ENCODE measurements at regions of chr9 and their contacts with region 1.

Region 1: DNA sequence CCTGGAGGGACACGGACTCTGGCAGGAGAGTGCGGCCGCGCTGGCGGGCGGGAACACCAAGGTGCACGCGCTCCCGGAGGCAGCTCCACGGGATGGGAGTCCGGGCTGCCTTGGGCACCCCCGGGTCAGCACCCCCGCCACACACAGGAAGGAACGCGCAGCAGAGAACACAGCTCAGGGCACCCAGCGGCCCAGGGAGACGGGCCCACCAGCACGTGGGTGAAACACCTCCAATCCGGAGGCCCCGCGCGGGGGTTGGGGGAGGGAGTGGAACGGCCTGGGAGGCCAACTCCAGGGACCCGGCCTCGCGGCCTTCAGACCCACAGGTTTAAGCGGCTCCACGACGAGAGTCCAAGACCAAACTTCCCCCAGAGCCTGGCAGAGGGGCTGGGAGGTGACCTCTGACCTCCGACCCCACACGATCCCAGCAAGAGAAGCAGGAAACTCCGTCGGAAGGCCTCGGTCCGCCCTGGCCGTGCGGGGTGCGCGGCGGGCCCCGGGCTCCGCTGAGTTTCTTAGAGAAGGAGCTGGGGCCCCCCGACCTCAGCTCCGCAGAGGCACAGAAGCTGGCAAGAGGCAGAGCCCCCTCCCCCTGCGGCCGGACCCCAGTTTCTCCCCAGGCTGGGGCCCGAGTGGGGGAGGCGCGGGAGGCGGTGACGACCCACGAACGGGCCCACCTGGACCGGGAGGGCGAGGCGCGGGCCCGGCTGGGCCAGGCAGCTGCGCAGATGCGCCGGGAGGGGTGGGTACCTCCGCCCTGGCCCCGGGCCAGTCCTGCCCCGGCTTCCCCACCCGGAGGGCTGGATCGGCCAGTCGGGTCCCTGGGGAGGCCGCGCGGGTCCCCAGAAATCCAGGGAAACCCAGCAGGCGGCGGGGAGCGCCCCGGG is 851 bp downstream of the NACC2 start:
- DNase-seq: peak; percentile 75 to 82 (median 80)
- ATAC-seq: peak; percentile 68
- H3K4me3 ChIP-seq: peak overlapping the region; percentile 74 to 85
- H3K27ac ChIP-seq: peak overlapping the region; percentile 52 to 93 (median 86)
- H3K4me1 ChIP-seq: peaks cover 62% of the 10 kb centered on the region
- H3K27me3 ChIP-seq: no peaks in the 10 kb centered on the region
- CTCF ChIP-seq: no peak
- POLR2A ChIP-seq: peak; percentile 24 to 59 (median 52)

Region 2: GRCh38 chr9:136059321-136060233 is 34.7 kb before region 1 on chr9:
- intact Hi-C with region 1: loop called (anchors 5 kb)
- DNase-seq: no peak
- ATAC-seq: no peak
- H3K4me3 ChIP-seq: no peak overlapping the region
- H3K27ac ChIP-seq: no peak overlapping the region
- H3K4me1 ChIP-seq: peaks cover 4% of the 10 kb centered on the region
- H3K27me3 ChIP-seq: no peaks in the 10 kb centered on the region
- CTCF ChIP-seq: no peak
- POLR2A ChIP-seq: no peak

Region 3: DNA sequence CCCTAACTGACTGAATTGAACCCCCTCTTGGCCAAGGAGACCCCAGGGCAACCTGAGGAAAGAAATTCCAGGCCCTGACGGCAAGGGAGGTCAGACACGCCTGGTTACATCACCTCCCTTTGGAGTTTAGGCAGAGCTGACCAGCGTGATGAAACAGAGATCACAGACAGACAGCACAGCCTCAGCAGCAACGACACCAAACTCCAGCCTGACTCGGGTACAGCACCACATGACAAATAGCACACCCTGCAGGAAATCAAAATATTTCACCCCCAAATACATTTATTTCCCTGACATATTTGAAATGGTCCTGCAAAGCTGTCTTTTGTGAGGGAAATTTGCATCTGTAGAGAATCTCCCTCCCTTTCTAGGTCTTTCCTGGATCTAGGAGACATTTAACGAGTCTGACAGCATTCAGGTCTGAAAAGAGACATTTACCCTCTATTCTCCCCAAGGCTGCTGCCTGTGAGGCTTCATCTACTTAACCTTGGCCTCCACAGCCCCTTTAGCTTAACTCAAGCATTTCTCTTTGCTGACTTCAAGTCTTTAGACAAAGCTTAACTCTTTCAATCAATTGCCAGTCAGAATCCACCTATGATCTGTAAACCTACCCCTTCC is 148.8 kb after region 1 on chr9:
- intact Hi-C with region 1: no loop called
- DNase-seq: no peak
- ATAC-seq: no peak
- H3K4me3 ChIP-seq: no peak overlapping the region
- H3K27ac ChIP-seq: no peak overlapping the region
- H3K4me1 ChIP-seq: peaks cover 86% of the 10 kb centered on the region
- H3K27me3 ChIP-seq: no peaks in the 10 kb centered on the region
- CTCF ChIP-seq: peak in 1 of 7 experiments; percentile 10
- POLR2A ChIP-seq: no peak

Measured in body of pancreas (tissue), 4 donors.